Left lung (tissue), 14 donors: ENCODE measurements at regions of chr9 and their contacts with region 1.

Region 1: DNA sequence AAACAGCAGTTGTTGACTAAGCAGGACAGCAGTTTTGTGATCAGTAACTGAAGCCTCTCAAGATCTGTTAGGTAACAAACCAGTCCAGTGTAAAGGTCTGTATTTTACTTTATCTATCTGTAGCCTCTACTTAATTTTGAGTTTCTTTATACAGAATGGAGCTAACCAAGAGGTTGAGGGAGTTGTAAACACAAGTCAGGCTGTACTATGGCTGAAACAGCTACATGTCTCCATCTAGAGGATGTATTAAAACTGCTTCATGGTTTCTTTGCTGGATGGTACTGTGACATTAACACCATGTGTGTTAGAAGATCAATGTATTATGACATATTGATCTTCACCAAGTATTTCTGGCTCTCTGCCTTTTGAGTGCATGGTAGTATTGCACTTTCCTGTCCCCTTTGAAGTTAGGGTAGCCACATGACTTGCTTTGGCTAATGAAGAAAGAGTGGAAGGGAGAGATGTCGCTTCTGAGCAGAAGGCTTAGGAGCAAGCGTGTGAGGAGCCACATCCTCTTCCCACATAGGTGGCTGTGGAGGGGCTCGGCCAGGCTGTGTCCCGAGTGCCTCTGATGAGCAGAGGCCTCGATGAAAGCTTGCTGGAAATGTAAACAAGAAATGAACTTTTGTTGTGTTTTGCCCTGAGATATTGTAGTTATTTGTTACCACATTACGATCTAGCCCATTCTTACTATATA is 105.6 kb upstream of the PCA3 start:
- DNase-seq: peak in 3 of 4 donors; percentile 35 to 63 (median 61)
- ATAC-seq: peak; percentile 92
- H3K4me3 ChIP-seq: no peak overlapping the region
- H3K27ac ChIP-seq: no peak overlapping the region
- H3K4me1 ChIP-seq: peaks cover 5 to 44% of the 10 kb centered on the region in 2 donors
- H3K27me3 ChIP-seq: no peaks in the 10 kb centered on the region
- CTCF ChIP-seq: peak; percentile 50 to 52

Region 2: DNA sequence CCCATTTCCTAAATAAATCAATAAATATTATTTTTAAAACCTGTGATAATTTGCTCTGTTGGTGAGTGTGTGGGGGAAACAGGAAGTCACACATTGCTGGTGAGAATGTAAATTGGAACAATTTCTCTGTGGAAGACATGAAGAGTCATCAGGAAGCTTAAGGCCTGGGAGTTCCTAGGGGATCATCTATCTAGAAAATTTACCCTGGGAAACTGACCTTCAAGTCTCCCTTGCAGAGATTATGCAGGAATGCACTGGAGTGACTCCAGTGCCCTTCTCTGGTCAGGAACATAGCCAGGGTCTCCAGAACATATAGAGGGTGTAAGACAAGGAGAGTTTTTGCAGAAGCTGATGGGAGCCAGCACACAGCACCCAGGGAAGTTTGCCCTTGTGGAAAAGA is 212.7 kb before region 1 on chr9:
- intact Hi-C with region 1: loop called in 1 of 2 experiments (anchors 5 kb)
- DNase-seq: no peak
- ATAC-seq: no peak
- H3K4me3 ChIP-seq: no peak overlapping the region
- H3K27ac ChIP-seq: no peak overlapping the region
- H3K4me1 ChIP-seq: peaks cover 0 to 6% of the 10 kb centered on the region in 2 donors
- H3K27me3 ChIP-seq: no peaks in the 10 kb centered on the region
- CTCF ChIP-seq: no peak